Activated B cell treated with CpG ODN at 0.5 μM for 24 hours (primary cell): ENCODE measurements at regions of chr14 and their contacts with region 1.

Region 1: DNA sequence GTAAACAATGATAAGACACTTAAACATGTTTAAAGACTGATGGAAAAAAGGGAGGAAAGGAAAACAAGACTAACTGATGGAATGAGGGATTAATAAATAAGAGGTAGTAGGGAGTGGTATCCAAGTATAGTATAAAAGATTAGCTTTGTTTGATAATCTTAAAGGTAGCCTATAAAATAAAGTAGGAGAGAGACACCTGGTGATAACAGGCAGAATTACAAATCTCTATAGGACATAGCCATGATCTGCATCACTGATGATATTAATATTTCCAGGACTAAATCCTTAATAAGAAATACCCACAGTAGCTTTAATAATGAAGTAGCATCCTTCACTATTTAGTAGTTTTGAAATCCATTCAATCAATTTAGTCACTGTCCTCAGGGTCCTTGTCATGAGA is 30.4 kb downstream of the DLGAP5 start:
- DNase-seq: no peak
- ATAC-seq: peak; percentile 75
- H3K4me3 Mint-ChIP-seq: no peak overlapping the region
- H3K27ac Mint-ChIP-seq: no peak overlapping the region
- H3K4me1 Mint-ChIP-seq: peaks cover 2% of the 10 kb centered on the region
- H3K27me3 Mint-ChIP-seq: no peaks in the 10 kb centered on the region
- CTCF ChIP-seq: no peak

Region 2: GRCh38 chr14:55088356-55088755 is 72.6 kb before region 1 on chr14:
- CTCF ChIA-PET with region 1: interaction called, 77 read pairs
- POLR2A ChIA-PET with region 1: interaction called, 10 read pairs
- intact Hi-C with region 1: loop called (anchors 1 kb)
- DNase-seq: no peak
- ATAC-seq: no peak
- H3K4me3 Mint-ChIP-seq: no peak overlapping the region
- H3K27ac Mint-ChIP-seq: no peak overlapping the region
- H3K4me1 Mint-ChIP-seq: peaks cover 9% of the 10 kb centered on the region
- H3K27me3 Mint-ChIP-seq: no peaks in the 10 kb centered on the region
- CTCF ChIP-seq: no peak

Region 3: DNA sequence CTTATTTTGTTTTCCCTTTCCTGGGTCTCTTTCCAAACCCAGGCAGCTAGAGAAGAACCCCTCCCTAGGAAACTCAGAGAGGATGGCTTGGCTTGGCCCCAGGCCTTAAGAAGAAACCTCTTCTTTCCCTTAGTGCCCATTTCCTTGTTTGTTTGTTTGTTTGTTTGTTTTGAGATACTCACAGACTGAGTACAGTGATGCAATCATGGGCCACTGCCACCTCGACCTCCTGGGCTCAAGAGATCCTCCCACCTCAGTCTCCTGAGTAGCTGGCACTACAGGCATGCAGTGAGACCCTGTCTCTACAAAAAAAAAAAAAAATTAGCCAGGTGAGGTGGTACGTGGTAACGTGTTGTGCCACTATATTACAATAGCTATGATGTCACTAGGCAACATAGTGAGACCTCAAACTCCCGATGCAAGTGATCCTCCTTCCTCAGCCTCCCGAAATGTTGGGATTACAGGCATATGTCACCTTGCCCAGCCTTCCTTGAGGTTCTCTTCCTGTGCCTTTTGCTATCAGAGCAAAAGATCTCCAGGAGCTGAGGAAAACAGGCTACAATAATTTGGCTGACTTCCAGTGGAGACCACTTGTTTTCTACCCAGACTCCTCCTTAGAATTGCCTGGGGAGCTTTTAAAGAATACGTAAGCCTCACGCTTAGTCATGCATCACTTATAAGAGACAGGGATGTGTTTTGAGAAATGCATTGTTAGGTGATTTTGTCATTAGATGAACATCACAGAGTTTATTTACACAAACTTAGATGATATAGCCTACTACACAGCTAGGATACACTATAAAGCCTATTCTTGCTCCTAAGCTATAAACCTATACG is 66.5 kb before region 1 on chr14:
- CTCF ChIA-PET with region 1: interaction called, 77 read pairs
- POLR2A ChIA-PET with region 1: interaction called, 10 read pairs
- intact Hi-C with region 1: loop called (anchors 1 kb)
- DNase-seq: no peak
- ATAC-seq: no peak
- H3K4me3 Mint-ChIP-seq: no peak overlapping the region
- H3K27ac Mint-ChIP-seq: no peak overlapping the region
- H3K4me1 Mint-ChIP-seq: peaks cover 28% of the 10 kb centered on the region
- H3K27me3 Mint-ChIP-seq: no peaks in the 10 kb centered on the region
- CTCF ChIP-seq: no peak

Region 4: DNA sequence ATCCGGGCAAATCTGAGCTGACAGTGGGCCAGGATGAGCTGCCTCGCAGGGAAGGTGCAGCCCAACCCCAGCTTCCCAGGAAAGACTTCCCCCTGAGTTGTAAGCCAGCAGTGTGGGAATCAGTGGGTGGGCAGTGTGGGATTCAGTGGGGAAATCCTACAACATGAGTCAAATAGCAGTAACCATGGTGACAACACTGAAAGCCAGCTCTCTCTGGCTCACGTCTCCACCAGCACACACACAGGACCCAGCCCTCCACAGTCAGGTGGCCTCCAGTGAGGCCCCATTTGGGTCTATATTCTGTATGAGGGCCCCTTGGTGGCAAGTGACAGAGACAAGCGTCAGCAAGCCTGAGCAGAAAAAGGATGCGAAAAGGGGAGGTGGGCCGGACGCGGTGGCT is 37.9 kb before region 1 on chr14:
- CTCF ChIA-PET with region 1: no interaction called
- POLR2A ChIA-PET with region 1: no interaction called
- intact Hi-C with region 1: no loop called
- DNase-seq: no peak
- ATAC-seq: no peak
- H3K4me3 Mint-ChIP-seq: no peak overlapping the region
- H3K27ac Mint-ChIP-seq: no peak overlapping the region
- H3K4me1 Mint-ChIP-seq: peaks cover 20% of the 10 kb centered on the region
- H3K27me3 Mint-ChIP-seq: no peaks in the 10 kb centered on the region
- CTCF ChIP-seq: no peak

Region 5: GRCh38 chr14:55146425-55146824 is 14.6 kb before region 1 on chr14:
- CTCF ChIA-PET with region 1: interaction called, 9 read pairs
- POLR2A ChIA-PET with region 1: no interaction called
- intact Hi-C with region 1: loop called (anchors 2 kb)
- DNase-seq: no peak
- ATAC-seq: no peak
- H3K4me3 Mint-ChIP-seq: no peak overlapping the region
- H3K27ac Mint-ChIP-seq: no peak overlapping the region
- H3K4me1 Mint-ChIP-seq: no peaks in the 10 kb centered on the region
- H3K27me3 Mint-ChIP-seq: no peaks in the 10 kb centered on the region
- CTCF ChIP-seq: no peak